ENCODE measurements at regions of chr1 and their contacts with region 1.

Region 1: GRCh38 chr1:44775078-44775929 is at the start of gene RPS8:
- DNase-seq: peak; percentile 85 to 94
- H3K4me3 ChIP-seq: peak within 1 kb of the TSS; percentile 68 to 95 (median 84)
- H3K27ac ChIP-seq: peak within 1 kb of the TSS; percentile 85
- H3K4me1 ChIP-seq: peaks cover 0 to 8% (median 2%) of the 10 kb centered on the region in 4 experiments; a peak in 5 of 7 replicates
- H3K27me3 ChIP-seq: no peaks in the 10 kb centered on the region
- CTCF ChIP-seq: no peak
- EP300 ChIP-seq: peak in 1 of 2 experiments; percentile 51; a peak in 1 of 3 replicates
- POLR2A ChIP-seq: peak; percentile 98 to 99
- RAD21 ChIP-seq: 0 out of 4 replicates have a peak, but pooled peaks of 1 of the 2 experiments have one; percentile 3
- total RNA-seq, gene RPS8: 2,387 and 2,407 TPM in 2 replicates

Region 2: DNA sequence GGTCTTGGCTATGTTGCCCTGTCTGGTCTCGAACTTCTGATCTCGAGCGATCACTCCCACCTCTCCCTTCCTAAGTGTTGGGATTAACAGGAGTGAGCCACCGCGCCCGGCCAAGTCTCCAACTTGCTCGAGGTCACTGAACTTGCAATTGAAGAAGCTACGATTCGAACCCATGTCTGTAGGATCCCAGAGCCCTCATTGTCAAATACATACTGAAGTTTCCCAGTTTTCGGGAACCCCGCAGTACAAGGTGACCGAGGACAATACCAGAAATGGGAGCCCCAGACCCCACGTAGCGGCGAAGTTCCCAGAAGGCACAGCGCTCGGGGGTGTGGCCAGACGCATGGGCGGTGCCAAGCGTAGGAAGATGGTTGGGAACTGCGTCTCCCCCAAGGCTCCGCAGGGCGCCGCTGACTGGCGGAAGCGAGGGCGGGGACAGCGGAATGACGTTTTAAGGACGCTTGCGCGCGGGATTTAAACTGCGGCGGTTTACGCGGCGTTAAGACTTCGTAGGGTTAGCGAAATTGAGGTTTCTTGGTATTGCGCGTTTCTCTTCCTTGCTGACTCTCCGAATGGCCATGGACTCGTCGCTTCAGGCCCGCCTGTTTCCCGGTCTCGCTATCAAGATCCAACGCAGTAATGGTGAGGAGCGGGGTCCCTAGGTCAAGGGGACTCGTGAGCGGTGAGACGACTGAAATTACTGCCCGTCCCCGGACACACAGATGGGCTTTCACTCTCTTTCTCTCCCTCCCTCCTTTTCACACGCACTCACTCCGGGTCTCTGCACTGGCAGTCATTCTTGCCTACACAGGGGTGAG is 35.7 kb before region 1 on chr1 and contains the start of gene KIF2C:
- CTCF ChIA-PET with region 1: no interaction called
- POLR2A ChIA-PET with region 1: interaction called, 428 read pairs
- DNase-seq: peak; percentile 91 to 97
- H3K4me3 ChIP-seq: peak within 1 kb of the TSS; percentile 54 to 98 (median 94)
- H3K27ac ChIP-seq: peak within 1 kb of the TSS; percentile 83
- H3K4me1 ChIP-seq: peaks cover 0 to 3% (median 2%) of the 10 kb centered on the region in 4 experiments; a peak in 3 of 7 replicates
- H3K27me3 ChIP-seq: no peaks in the 10 kb centered on the region
- CTCF ChIP-seq: no peak
- EP300 ChIP-seq: no peak
- POLR2A ChIP-seq: peak; percentile 40 to 93
- RAD21 ChIP-seq: no peak
- total RNA-seq, gene KIF2C: 66.4 and 68.1 TPM in 2 replicates

Region 3: GRCh38 chr1:44786138-44786840 is 11.0 kb after region 1 on chr1:
- CTCF ChIA-PET with region 1: interaction called, 21 read pairs
- POLR2A ChIA-PET with region 1: interaction called, 310 read pairs
- DNase-seq: peak in 1 of 2 experiments; percentile 94
- H3K4me3 ChIP-seq: peak overlapping the region; percentile 17 to 58 (median 46)
- H3K27ac ChIP-seq: no peak overlapping the region
- H3K4me1 ChIP-seq: peaks cover 4 to 18% (median 14%) of the 10 kb centered on the region in 4 experiments
- H3K27me3 ChIP-seq: peaks cover 0 to 7% (median 2%) of the 10 kb centered on the region in 4 experiments; a peak in 3 of 7 replicates
- CTCF ChIP-seq: peak; percentile 80 to 100 (median 100)
- EP300 ChIP-seq: peak in 1 of 2 experiments; percentile 98; a peak in 1 of 3 replicates
- POLR2A ChIP-seq: peak in 1 of 2 experiments; percentile 50; a peak in 1 of 3 replicates
- RAD21 ChIP-seq: peak; percentile 83 to 84

Region 4: GRCh38 chr1:44807262-44808062 is 32.2 kb after region 1 on chr1 and contains the start of gene DYNLT4:
- CTCF ChIA-PET with region 1: interaction called, 3 read pairs
- POLR2A ChIA-PET with region 1: interaction called, 65 read pairs
- DNase-seq: peak in 1 of 2 experiments; percentile 89
- H3K4me3 ChIP-seq: peak within 1 kb of the TSS in 2 of 4 experiments; percentile 5 to 37; a peak in 3 of 8 replicates
- H3K27ac ChIP-seq: peak within 1 kb of the TSS; percentile 96
- H3K4me1 ChIP-seq: peaks cover 10 to 37% (median 28%) of the 10 kb centered on the region in 4 experiments
- H3K27me3 ChIP-seq: peaks cover 0 to 4% (median 1%) of the 10 kb centered on the region in 4 experiments; a peak in 3 of 7 replicates
- CTCF ChIP-seq: no peak
- EP300 ChIP-seq: peak; percentile 36 to 89; a peak in 2 of 3 replicates
- POLR2A ChIP-seq: peak in 1 of 2 experiments; percentile 80; a peak in 2 of 3 replicates
- RAD21 ChIP-seq: no peak
- total RNA-seq, gene DYNLT4: not detected in 2 replicates

Region 5: GRCh38 chr1:44819608-44820327 is 44.5 kb after region 1 on chr1:
- CTCF ChIA-PET with region 1: interaction called, 5 read pairs
- POLR2A ChIA-PET with region 1: interaction called, 98 read pairs
- DNase-seq: peak; percentile 79 to 91
- H3K4me3 ChIP-seq: peak overlapping the region; percentile 40 to 64 (median 47)
- H3K27ac ChIP-seq: peak overlapping the region; percentile 100
- H3K4me1 ChIP-seq: peaks cover 2 to 5% (median 3%) of the 10 kb centered on the region in 4 experiments; a peak in 5 of 7 replicates
- H3K27me3 ChIP-seq: no peaks in the 10 kb centered on the region; a peak in 2 of 7 replicates
- CTCF ChIP-seq: 0 out of 4 replicates have a peak, but pooled peaks of 1 of the 3 experiments have one; percentile 5
- EP300 ChIP-seq: peak in 1 of 2 experiments; percentile 79; a peak in 1 of 3 replicates
- POLR2A ChIP-seq: peak; percentile 99 to 100
- RAD21 ChIP-seq: peak in 1 of 2 experiments; percentile 15; a peak in 3 of 4 replicates

Region 6: DNA sequence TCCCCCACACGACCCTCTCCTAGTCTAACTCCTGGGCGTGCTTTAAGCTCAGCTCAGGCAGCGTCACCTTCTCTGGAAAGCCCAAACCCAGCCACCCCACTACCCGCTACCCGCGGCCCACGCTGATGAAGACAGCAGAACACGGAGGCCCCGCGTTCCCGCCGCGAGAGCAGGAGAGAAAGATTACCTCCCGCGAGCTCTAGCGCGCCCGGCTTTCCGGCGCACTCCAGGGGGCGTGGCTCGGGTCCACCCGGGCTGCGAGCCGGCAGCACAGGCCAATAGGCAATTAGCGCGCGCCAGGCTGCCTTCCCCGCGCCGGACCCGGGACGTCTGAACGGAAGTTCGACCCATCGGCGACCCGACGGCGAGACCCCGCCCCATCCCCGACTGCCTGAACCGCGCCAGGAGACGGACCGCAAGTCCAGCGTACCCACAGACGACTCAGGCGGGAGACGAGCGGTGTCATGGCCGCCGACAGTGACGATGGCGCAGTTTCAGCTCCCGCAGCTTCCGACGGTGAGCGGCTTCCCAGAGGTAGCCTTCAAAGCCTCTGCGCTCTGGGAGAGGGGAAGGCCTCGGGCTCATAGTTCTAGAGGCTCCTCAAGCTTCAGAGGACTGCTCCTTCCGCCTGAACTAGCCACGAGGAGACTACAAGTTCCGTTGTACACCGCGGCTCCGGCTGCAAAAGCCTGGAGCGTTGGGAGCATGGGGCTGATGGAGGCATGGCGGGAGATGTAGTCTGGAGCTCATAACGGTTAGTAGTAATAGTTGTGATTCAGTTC is 564.7 kb after region 1 on chr1 and contains the starts of genes MUTYH and TOE1:
- CTCF ChIA-PET with region 1: no interaction called
- POLR2A ChIA-PET with region 1: interaction called, 11 read pairs
- DNase-seq: peak; percentile 88 to 95
- H3K4me3 ChIP-seq: peak within 1 kb of the TSS; percentile 84 to 97 (median 92)
- H3K27ac ChIP-seq: peak within 1 kb of the TSS; percentile 97
- H3K4me1 ChIP-seq: peaks cover 0 to 9% (median 6%) of the 10 kb centered on the region in 4 experiments; a peak in 6 of 7 replicates
- H3K27me3 ChIP-seq: no peaks in the 10 kb centered on the region
- CTCF ChIP-seq: no peak
- EP300 ChIP-seq: no peak
- POLR2A ChIP-seq: peak; percentile 94 to 96
- RAD21 ChIP-seq: no peak
- total RNA-seq, gene MUTYH: 51.9 TPM in 2 replicates
- total RNA-seq, gene TOE1: 14.5 and 15.2 TPM in 2 replicates